ENCODE measurements at regions of chr9 and their contacts with region 1.

Region 1: GRCh38 chr9:38088006-38088925 is 19.2 kb upstream of the SHB start:
- DNase-seq: peak; percentile 79
- H3K4me3 Mint-ChIP-seq: no peak overlapping the region
- H3K27ac Mint-ChIP-seq: no peak overlapping the region
- H3K4me1 Mint-ChIP-seq: no peaks in the 10 kb centered on the region
- H3K27me3 Mint-ChIP-seq: peaks cover 9% of the 10 kb centered on the region

Region 2: DNA sequence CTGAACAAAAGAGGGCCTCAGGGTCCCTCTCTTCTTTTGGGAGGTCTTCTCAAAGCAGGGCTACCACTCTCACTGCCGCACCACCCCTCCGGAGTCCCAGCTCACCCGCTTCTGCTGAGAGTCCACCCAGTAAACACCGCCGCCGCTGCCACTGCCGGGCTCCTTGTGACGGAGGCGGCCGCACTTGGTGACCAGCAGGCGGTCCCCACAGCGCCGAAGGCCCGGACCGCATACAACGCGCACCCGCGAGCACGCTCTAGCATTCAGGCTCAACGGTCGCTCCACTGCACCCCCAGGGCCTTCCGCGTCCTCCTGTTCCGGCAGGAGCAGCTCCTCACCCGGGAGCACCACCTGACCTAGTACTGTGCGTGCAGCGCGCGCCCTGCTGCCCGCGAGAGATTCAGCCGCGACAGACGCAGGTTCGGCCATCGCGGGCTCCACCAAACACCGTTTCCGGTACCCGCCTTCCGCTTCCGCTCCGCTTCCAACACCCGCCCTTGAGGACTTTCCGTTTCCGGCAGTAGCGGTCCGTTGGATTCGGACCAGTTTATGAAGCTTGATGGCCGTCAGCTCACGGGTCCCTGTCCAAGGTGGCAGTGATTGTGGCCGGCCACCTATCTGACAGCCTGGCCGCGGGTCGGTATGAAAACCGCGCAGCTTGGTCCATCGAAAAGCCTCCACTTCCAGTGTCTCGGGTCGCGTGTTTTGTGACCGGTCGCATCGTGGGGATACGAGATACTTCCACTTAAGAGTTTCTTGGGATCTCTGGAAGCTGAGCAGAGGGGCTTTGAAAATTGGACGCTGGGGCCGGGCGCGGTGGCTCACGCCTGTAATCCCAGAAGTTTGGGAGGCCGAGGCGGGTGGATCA is 303.4 kb before region 1 on chr9 and contains the start of gene EXOSC3:
- CTCF ChIA-PET with region 1: no interaction called
- POLR2A ChIA-PET with region 1: no interaction called
- intact Hi-C with region 1: no loop called
- DNase-seq: peak; percentile 93
- H3K4me3 Mint-ChIP-seq: peak within 1 kb of the TSS; percentile 98
- H3K27ac Mint-ChIP-seq: peak within 1 kb of the TSS; percentile 93
- H3K4me1 Mint-ChIP-seq: peaks cover 38% of the 10 kb centered on the region
- H3K27me3 Mint-ChIP-seq: no peaks in the 10 kb centered on the region
- total RNA-seq, gene EXOSC3: 97.5 to 97.9 TPM

Region 3: GRCh38 chr9:37899041-37899440 is 189.2 kb before region 1 on chr9:
- CTCF ChIA-PET with region 1: no interaction called
- POLR2A ChIA-PET with region 1: no interaction called
- intact Hi-C with region 1: no loop called
- DNase-seq: no peak
- H3K4me3 Mint-ChIP-seq: no peak overlapping the region
- H3K27ac Mint-ChIP-seq: no peak overlapping the region
- H3K4me1 Mint-ChIP-seq: peaks cover 18% of the 10 kb centered on the region
- H3K27me3 Mint-ChIP-seq: no peaks in the 10 kb centered on the region

Region 4: DNA sequence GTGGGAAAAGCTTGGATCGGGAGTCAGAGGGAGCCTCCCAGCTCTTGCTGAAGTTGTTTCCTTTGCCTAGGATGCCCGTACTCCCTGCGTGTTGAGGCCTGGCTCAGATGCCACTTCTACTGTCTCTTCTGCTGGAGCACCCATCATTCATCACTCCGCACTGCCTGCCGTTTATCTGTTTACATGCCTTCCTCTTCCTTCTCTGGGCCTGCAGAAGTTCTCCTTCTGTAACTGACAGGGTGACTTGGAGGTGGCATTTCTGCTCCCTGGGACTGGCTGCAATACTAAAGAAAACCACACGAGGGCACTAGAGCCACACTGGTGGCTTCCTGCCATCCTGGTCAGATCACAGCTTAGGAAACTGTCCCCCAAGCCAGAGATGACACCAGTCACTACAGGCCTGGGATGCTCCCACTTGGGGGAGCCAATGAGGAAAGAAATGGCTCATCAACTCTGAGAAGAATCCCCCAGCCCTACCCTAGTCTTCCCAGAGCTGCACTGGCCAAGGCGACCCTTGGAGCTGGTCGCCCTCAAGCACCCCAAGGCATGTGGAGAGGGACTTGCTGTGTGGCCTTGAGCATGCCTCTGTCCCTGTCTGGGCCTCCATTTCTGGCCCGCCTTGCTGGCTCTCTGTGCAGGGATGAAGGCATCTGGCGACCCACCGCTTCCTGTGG is 174.6 kb before region 1 on chr9:
- CTCF ChIA-PET with region 1: interaction called, 86 read pairs
- POLR2A ChIA-PET with region 1: no interaction called
- intact Hi-C with region 1: loop called (anchors 5 kb)
- DNase-seq: peak; percentile 88
- H3K4me3 Mint-ChIP-seq: no peak overlapping the region
- H3K27ac Mint-ChIP-seq: no peak overlapping the region
- H3K4me1 Mint-ChIP-seq: no peaks in the 10 kb centered on the region
- H3K27me3 Mint-ChIP-seq: no peaks in the 10 kb centered on the region

Region 5: GRCh38 chr9:37994639-37995347 is 93.5 kb before region 1 on chr9:
- CTCF ChIA-PET with region 1: interaction called, 14 read pairs
- POLR2A ChIA-PET with region 1: no interaction called
- intact Hi-C with region 1: no loop called
- DNase-seq: peak; percentile 75
- H3K4me3 Mint-ChIP-seq: no peak overlapping the region
- H3K27ac Mint-ChIP-seq: peak overlapping the region; percentile 59
- H3K4me1 Mint-ChIP-seq: peaks cover 11% of the 10 kb centered on the region
- H3K27me3 Mint-ChIP-seq: peaks cover 7% of the 10 kb centered on the region

Region 6: GRCh38 chr9:38068866-38069629 is 19.2 kb before region 1 on chr9 and contains the start of gene SHB:
- CTCF ChIA-PET with region 1: interaction called, 10 read pairs
- POLR2A ChIA-PET with region 1: no interaction called
- intact Hi-C with region 1: no loop called
- DNase-seq: peak; percentile 85
- H3K4me3 Mint-ChIP-seq: peak within 1 kb of the TSS; percentile 68
- H3K27ac Mint-ChIP-seq: no peak within 1 kb of the TSS
- H3K4me1 Mint-ChIP-seq: peaks cover 19% of the 10 kb centered on the region
- H3K27me3 Mint-ChIP-seq: peaks cover 6% of the 10 kb centered on the region
- total RNA-seq, gene SHB: 1.1 to 1.2 TPM

Region 7: DNA sequence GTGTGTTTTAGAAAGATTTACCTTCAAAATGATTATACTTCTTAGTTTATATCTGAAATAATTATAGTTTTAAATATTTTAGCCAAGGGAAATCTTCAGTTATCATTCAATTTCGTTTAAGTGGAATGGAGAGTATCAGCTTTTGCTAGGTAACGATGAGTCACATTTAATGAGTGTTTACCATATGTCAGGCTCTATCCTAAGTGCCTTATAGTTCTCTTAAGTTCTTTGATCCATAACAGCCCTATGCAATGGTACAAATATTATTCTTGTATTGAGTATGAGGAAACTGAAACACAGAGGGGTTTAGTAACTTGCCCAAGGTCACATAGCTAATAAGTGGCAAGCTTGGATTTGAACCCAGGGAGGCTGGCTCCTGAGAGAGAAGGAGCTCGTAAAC is 18.2 kb after region 1 on chr9:
- CTCF ChIA-PET with region 1: interaction called, 14 read pairs
- POLR2A ChIA-PET with region 1: no interaction called
- intact Hi-C with region 1: no loop called
- DNase-seq: no peak
- H3K4me3 Mint-ChIP-seq: no peak overlapping the region
- H3K27ac Mint-ChIP-seq: no peak overlapping the region
- H3K4me1 Mint-ChIP-seq: no peaks in the 10 kb centered on the region
- H3K27me3 Mint-ChIP-seq: peaks cover 13% of the 10 kb centered on the region

Region 8: GRCh38 chr9:38160613-38161215 is 72.4 kb after region 1 on chr9:
- CTCF ChIA-PET with region 1: interaction called, 31 read pairs
- POLR2A ChIA-PET with region 1: no interaction called
- intact Hi-C with region 1: loop called (anchors 2 kb)
- DNase-seq: peak; percentile 69
- H3K4me3 Mint-ChIP-seq: peak overlapping the region; percentile 7
- H3K27ac Mint-ChIP-seq: no peak overlapping the region
- H3K4me1 Mint-ChIP-seq: no peaks in the 10 kb centered on the region
- H3K27me3 Mint-ChIP-seq: no peaks in the 10 kb centered on the region

Region 9: GRCh38 chr9:38305582-38305981 is 217.3 kb after region 1 on chr9:
- CTCF ChIA-PET with region 1: no interaction called
- POLR2A ChIA-PET with region 1: no interaction called
- intact Hi-C with region 1: no loop called
- DNase-seq: no peak
- H3K4me3 Mint-ChIP-seq: no peak overlapping the region
- H3K27ac Mint-ChIP-seq: no peak overlapping the region
- H3K4me1 Mint-ChIP-seq: no peaks in the 10 kb centered on the region
- H3K27me3 Mint-ChIP-seq: peaks cover 8% of the 10 kb centered on the region

Region 10: GRCh38 chr9:38362852-38363593 is 274.8 kb after region 1 on chr9:
- CTCF ChIA-PET with region 1: interaction called, 3 read pairs
- POLR2A ChIA-PET with region 1: no interaction called
- intact Hi-C with region 1: loop called (anchors 10 kb)
- DNase-seq: peak; percentile 19
- H3K4me3 Mint-ChIP-seq: peak overlapping the region; percentile 18
- H3K27ac Mint-ChIP-seq: no peak overlapping the region
- H3K4me1 Mint-ChIP-seq: no peaks in the 10 kb centered on the region
- H3K27me3 Mint-ChIP-seq: no peaks in the 10 kb centered on the region

Measured in activated CD4-positive, alpha-beta memory T cell treated with anti-CD3 and anti-CD28 coated beads for 36 hours (primary cell).